Ascending aorta (tissue), 2 donors: ENCODE measurements at regions of chr1 and their contacts with region 1.

Region 1: GRCh38 chr1:58739856-58740466 is 40.1 kb upstream of the MYSM1 start:
- DNase-seq: no peak
- H3K4me3 ChIP-seq: no peak overlapping the region
- H3K27ac ChIP-seq: no peak overlapping the region
- H3K4me1 ChIP-seq: no peaks in the 10 kb centered on the region
- H3K27me3 ChIP-seq: no peaks in the 10 kb centered on the region
- CTCF ChIP-seq: peak; percentile 73 to 88 (median 76)

Region 2: GRCh38 chr1:58465825-58466629 is 273.9 kb before region 1 on chr1:
- intact Hi-C with region 1: no loop called
- DNase-seq: no peak
- H3K4me3 ChIP-seq: no peak overlapping the region
- H3K27ac ChIP-seq: no peak overlapping the region
- H3K4me1 ChIP-seq: no peaks in the 10 kb centered on the region
- H3K27me3 ChIP-seq: no peaks in the 10 kb centered on the region
- CTCF ChIP-seq: no peak

Region 3: DNA sequence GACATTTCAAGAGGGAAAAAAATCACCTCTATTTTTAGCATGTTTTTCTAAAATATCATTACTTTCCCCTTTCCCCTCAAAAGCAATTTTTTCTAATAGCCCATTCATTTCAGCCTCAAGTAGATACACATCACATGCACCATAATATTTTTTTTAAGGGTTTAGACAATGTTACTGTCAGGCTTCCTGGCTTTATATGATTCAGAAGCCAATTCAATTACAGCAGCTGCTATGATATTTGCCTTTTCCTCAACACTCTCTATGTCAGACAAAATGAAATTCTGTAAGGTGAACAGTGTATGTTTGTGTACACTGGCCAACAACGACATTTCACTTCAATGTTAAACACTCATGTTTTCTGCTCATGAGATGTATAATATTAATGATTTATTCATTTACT is 239.9 kb before region 1 on chr1:
- intact Hi-C with region 1: no loop called
- DNase-seq: no peak
- H3K4me3 ChIP-seq: no peak overlapping the region
- H3K27ac ChIP-seq: no peak overlapping the region
- H3K4me1 ChIP-seq: no peaks in the 10 kb centered on the region
- H3K27me3 ChIP-seq: no peaks in the 10 kb centered on the region
- CTCF ChIP-seq: no peak

Region 4: GRCh38 chr1:58727363-58727762 is 12.6 kb before region 1 on chr1:
- intact Hi-C with region 1: no loop called
- DNase-seq: no peak
- H3K4me3 ChIP-seq: no peak overlapping the region
- H3K27ac ChIP-seq: peak overlapping the region in 1 of 2 donors; percentile 12
- H3K4me1 ChIP-seq: peaks cover 0 to 2% of the 10 kb centered on the region in 2 donors
- H3K27me3 ChIP-seq: no peaks in the 10 kb centered on the region
- CTCF ChIP-seq: no peak

Region 5: GRCh38 chr1:58768971-58769808 is 29.2 kb after region 1 on chr1:
- intact Hi-C with region 1: loop called (anchors 1 kb)
- DNase-seq: peak in 1 of 2 donors; percentile 87
- H3K4me3 ChIP-seq: no peak overlapping the region
- H3K27ac ChIP-seq: peak overlapping the region in 1 of 2 donors; percentile 24
- H3K4me1 ChIP-seq: peaks cover 3 to 24% of the 10 kb centered on the region in 2 donors
- H3K27me3 ChIP-seq: no peaks in the 10 kb centered on the region
- CTCF ChIP-seq: peak; percentile 74 to 87 (median 78)

Region 6: DNA sequence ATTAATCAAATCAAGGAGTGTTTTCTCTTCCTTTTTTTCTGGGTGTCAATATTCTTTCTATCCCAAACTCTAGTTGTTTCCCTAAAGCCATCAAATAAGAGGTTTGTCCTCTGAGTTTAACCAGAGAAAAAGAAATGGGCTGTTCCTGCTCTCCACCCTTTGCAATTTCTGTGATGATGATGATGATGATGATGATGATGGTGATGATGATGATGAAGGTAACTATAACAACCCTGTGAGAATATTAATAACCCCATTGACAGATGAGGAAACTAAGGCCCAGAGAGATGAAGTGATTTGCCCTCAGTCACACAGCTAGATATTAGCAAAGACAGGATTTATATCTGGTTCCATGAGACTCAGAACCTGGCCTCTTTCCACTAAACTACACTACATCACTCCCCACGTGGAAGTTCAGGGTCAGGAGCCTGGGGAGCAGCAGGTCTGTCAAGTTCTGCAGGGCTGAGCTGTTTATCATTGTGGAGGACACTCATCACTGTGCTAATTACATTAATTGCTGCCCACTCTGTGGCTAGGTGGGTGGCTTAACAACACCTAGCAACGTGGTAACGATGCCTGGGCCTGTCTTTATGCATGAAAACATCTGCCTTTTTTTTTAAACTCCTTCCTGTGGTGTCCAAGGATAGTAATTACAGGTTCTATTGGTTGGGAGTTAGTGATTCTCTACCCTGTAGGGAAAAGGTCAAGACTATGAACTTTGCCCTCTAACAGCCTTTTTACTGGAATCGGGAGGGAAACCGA is 62.9 kb after region 1 on chr1:
- intact Hi-C with region 1: no loop called
- DNase-seq: no peak
- H3K4me3 ChIP-seq: no peak overlapping the region
- H3K27ac ChIP-seq: no peak overlapping the region
- H3K4me1 ChIP-seq: no peaks in the 10 kb centered on the region
- H3K27me3 ChIP-seq: no peaks in the 10 kb centered on the region
- CTCF ChIP-seq: no peak

Region 7: GRCh38 chr1:59699227-59699847 is 959.4 kb after region 1 on chr1:
- intact Hi-C with region 1: loop called (anchors 2 kb)
- DNase-seq: no peak
- H3K4me3 ChIP-seq: peak overlapping the region in 1 of 2 donors; percentile 23
- H3K27ac ChIP-seq: peak overlapping the region in 1 of 2 donors; percentile 38
- H3K4me1 ChIP-seq: peaks cover 3 to 18% of the 10 kb centered on the region in 2 donors
- H3K27me3 ChIP-seq: no peaks in the 10 kb centered on the region
- CTCF ChIP-seq: peak; percentile 88 to 95 (median 92)

Region 8: GRCh38 chr1:59759156-59759925 is 1019.4 kb after region 1 on chr1:
- intact Hi-C with region 1: loop called (anchors 1 kb)
- DNase-seq: peak; percentile 18 to 89
- H3K4me3 ChIP-seq: peak overlapping the region; percentile 27 to 51
- H3K27ac ChIP-seq: peak overlapping the region; percentile 10 to 40
- H3K4me1 ChIP-seq: peaks cover 0 to 5% of the 10 kb centered on the region in 2 donors
- H3K27me3 ChIP-seq: no peaks in the 10 kb centered on the region
- CTCF ChIP-seq: peak; percentile 92 to 96 (median 96)